ENCODE measurements at regions of chr7 and their contacts with region 1.

Region 1: DNA sequence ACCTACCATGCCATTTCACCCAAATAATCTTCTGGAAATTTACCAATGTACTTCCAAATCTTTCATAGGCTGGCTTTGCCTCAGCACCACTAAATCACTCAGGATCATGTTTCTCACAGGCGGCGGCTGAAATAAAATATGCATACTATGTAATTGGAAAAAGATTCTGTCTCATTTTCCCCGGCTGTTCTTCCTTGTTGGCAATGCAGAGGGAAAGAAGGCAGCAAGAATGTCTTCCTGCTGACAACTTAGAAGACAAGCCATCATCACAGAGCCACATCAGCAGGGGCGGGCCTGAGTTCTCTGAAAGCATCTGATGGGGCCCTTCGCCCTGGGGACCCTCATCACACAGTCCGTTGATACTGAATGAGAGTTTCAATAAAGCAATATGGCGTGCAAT is 39.2 kb upstream of the COL1A2 start:
- DNase-seq: no peak
- H3K4me3 ChIP-seq: no peak overlapping the region
- H3K27ac ChIP-seq: peak overlapping the region in 1 of 2 donors; percentile 53
- H3K4me1 ChIP-seq: no peaks in the 10 kb centered on the region
- H3K27me3 ChIP-seq: no peaks in the 10 kb centered on the region
- CTCF ChIP-seq: no peak
- POLR2A ChIP-seq: no peak

Region 2: GRCh38 chr7:94286111-94286510 is 69.3 kb before region 1 on chr7:
- intact Hi-C with region 1: loop called (anchors 2 kb)
- DNase-seq: no peak
- H3K4me3 ChIP-seq: no peak overlapping the region
- H3K27ac ChIP-seq: no peak overlapping the region
- H3K4me1 ChIP-seq: no peaks in the 10 kb centered on the region
- H3K27me3 ChIP-seq: no peaks in the 10 kb centered on the region
- CTCF ChIP-seq: no peak
- POLR2A ChIP-seq: no peak

Region 3: DNA sequence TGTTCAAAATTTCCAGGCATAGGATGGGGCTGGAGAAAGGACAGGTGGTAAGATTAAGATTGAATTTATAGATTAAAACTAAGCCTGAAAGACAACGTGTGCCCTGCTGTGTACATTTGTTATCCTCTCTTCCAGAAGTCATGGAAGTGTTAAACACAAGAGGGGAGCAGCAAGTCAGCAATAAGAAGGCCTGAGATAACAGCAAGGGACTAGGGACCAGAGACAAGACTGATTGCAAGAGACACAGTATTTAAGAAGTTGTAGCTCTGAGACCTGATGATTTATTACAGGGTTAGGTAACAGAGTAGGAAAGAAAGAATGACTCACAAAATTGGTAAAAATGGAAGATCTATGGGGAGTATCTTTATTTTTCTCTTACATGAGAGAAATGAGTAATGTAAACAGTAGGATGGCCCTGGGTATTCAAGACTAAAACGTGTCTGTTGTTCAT is 16.5 kb before region 1 on chr7:
- intact Hi-C with region 1: loop called (anchors 2 kb)
- DNase-seq: no peak
- H3K4me3 ChIP-seq: no peak overlapping the region
- H3K27ac ChIP-seq: no peak overlapping the region
- H3K4me1 ChIP-seq: no peaks in the 10 kb centered on the region
- H3K27me3 ChIP-seq: no peaks in the 10 kb centered on the region
- CTCF ChIP-seq: no peak
- POLR2A ChIP-seq: no peak

Region 4: GRCh38 chr7:94687810-94688209 is 332.4 kb after region 1 on chr7:
- intact Hi-C with region 1: loop called (anchors 5 kb)
- DNase-seq: no peak
- H3K4me3 ChIP-seq: no peak overlapping the region
- H3K27ac ChIP-seq: no peak overlapping the region
- H3K4me1 ChIP-seq: no peaks in the 10 kb centered on the region
- H3K27me3 ChIP-seq: no peaks in the 10 kb centered on the region
- CTCF ChIP-seq: no peak
- POLR2A ChIP-seq: no peak

Measured in breast epithelium (tissue), 4 donors.